Activated CD4-positive, alpha-beta T cell treated with anti-CD3 and anti-CD28 coated beads, Interleukin-2, amount 10 ng/mL, durations not matched to agents 24 days and 14 days (primary cell): ENCODE measurements at regions of chr9 and their contacts with region 1.

Region 1: DNA sequence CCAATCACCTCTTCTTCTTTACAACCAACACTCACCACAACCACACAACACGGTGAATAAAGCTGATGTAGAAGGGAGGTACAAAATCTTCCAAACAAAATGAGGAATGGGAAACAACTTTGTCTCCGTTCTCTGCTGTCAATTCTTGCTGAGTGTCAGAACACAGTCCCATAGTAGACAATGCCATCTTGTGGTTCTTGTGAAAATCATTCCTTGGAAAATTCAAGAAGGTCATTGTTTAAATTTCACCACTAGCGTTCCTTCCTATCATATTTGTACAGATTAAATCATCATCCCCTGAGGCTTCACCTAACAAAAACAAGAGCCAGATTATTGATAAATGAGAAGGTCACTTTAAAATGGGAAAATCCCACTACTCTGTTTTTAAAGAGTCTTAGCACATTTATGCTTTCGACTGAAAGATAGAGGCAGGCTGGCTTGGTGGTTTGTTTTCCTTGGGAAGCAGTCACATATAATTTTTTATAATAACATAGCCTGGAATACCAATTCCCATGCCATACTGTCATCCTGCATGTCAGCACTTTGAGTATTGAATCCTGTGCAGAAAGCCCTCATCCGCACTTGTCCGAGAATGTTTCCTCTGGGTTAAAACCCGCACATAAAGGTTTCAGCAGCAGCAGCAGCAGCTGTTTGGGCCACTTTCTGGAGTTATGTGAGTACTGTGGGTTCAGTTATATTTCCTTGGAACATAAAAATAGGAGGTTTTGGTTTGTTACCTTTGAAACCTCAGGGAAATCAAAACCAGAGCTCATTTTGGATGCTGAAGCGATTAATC is 395.0 kb upstream of the SMARCA2 start:
- DNase-seq: no peak
- H3K4me3 Mint-ChIP-seq: no peak overlapping the region
- H3K27ac Mint-ChIP-seq: no peak overlapping the region
- H3K4me1 Mint-ChIP-seq: no peaks in the 10 kb centered on the region
- H3K27me3 Mint-ChIP-seq: no peaks in the 10 kb centered on the region

Region 2: GRCh38 chr9:1837449-1838084 is 217.5 kb after region 1 on chr9:
- intact Hi-C with region 1: loop called (anchors 5 kb)
- DNase-seq: no peak
- H3K4me3 Mint-ChIP-seq: no peak overlapping the region
- H3K27ac Mint-ChIP-seq: no peak overlapping the region
- H3K4me1 Mint-ChIP-seq: no peaks in the 10 kb centered on the region
- H3K27me3 Mint-ChIP-seq: peaks cover 9% of the 10 kb centered on the region